ENCODE measurements at regions of chr11 and their contacts with region 1.

Region 1: GRCh38 chr11:67468835-67469811 is at the start of gene TMEM134:
- DNase-seq: peak; percentile 97
- ATAC-seq: peak; percentile 95
- total RNA-seq, gene TMEM134: 82.9 TPM

Region 2: GRCh38 chr11:67288452-67289225 is 180.5 kb before region 1 on chr11:
- intact Hi-C with region 1: no loop called
- DNase-seq: peak; percentile 94
- ATAC-seq: peak; percentile 87

Region 3: GRCh38 chr11:67401495-67402191 is 67.5 kb before region 1 on chr11 and contains the start of gene PPP1CA:
- intact Hi-C with region 1: loop called (anchors 2 kb)
- DNase-seq: peak; percentile 93
- ATAC-seq: peak; percentile 89
- total RNA-seq, gene PPP1CA: 103 TPM

Region 4: GRCh38 chr11:67507864-67508485 is 38.9 kb after region 1 on chr11 and contains the start of gene CDK2AP2:
- intact Hi-C with region 1: loop called (anchors 5 kb)
- DNase-seq: peak; percentile 100
- ATAC-seq: peak; percentile 85
- total RNA-seq, gene CDK2AP2: 57.8 TPM

Region 5: DNA sequence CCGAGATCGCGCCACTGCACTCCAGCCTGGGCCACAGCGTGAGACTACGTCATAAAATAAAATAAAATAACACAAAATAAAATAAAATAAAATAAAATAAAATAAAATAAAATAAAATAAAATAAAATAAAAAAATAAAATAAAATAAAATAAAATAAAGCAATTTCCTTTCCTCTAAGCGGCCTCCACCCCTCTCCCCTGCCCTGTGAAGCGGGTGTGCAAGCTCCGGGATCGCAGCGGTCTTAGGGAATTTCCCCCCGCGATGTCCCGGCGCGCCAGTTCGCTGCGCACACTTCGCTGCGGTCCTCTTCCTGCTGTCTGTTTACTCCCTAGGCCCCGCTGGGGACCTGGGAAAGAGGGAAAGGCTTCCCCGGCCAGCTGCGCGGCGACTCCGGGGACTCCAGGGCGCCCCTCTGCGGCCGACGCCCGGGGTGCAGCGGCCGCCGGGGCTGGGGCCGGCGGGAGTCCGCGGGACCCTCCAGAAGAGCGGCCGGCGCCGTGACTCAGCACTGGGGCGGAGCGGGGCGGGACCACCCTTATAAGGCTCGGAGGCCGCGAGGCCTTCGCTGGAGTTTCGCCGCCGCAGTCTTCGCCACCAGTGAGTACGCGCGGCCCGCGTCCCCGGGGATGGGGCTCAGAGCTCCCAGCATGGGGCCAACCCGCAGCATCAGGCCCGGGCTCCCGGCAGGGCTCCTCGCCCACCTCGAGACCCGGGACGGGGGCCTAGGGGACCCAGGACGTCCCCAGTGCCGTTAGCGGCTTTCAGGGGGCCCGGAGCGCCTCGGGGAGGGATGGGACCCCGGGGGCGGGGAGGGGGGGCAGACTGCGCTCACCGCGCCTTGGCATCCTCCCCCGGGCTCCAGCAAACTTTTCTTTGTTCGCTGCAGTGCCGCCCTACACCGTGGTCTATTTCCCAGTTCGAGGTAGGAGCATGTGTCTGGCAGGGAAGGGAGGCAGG is 114.4 kb after region 1 on chr11 and contains the start of gene GSTP1:
- intact Hi-C with region 1: no loop called
- DNase-seq: peak; percentile 96
- ATAC-seq: peak; percentile 98
- total RNA-seq, gene GSTP1: 361 TPM

Region 6: DNA sequence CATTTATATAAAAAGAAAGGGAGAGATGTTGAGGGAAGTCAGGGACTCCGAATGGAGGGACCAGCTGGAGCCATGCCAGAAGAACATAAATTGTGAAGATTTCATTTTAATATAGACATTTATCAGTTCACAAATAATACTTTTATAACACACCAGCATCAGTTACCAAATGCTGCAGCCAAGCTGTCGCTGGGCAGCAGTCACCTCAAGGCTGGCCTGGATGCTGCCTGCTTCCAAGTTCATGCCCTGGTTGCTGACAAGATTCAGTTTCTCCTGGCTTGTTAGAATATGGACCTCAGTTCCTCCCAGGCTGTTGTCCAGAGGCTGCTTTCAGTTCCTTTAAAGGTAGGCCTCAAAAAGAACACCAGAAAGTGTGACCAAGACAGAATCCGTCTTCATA is 236.1 kb after region 1 on chr11:
- intact Hi-C with region 1: no loop called
- DNase-seq: no peak
- ATAC-seq: no peak